Heart left ventricle (tissue), 16 donors: ENCODE measurements at regions of chr3 and their contacts with region 1.

Region 1: GRCh38 chr3:185824476-185825378 is at the start of gene IGF2BP2:
- DNase-seq: peak; percentile 60 to 81 (median 67)
- ATAC-seq: peak; percentile 31 to 85 (median 70)
- H3K4me3 ChIP-seq: peak within 1 kb of the TSS; percentile 66 to 84 (median 74)
- H3K27ac ChIP-seq: peak within 1 kb of the TSS in 11 of 12 donors; percentile 49 to 83 (median 68)
- H3K4me1 ChIP-seq: peaks cover 0 to 39% (median 7%) of the 10 kb centered on the region in 12 donors
- H3K27me3 ChIP-seq: peaks cover 0 to 52% (median 9%) of the 10 kb centered on the region in 9 donors
- CTCF ChIP-seq: peak in 2 of 12 donors; percentile 3 to 17
- POLR2A ChIP-seq: peak in 1 of 2 donors; percentile 53
- total RNA-seq, gene IGF2BP2: 11.2 to 21.8 (median 16.8) TPM

Region 2: DNA sequence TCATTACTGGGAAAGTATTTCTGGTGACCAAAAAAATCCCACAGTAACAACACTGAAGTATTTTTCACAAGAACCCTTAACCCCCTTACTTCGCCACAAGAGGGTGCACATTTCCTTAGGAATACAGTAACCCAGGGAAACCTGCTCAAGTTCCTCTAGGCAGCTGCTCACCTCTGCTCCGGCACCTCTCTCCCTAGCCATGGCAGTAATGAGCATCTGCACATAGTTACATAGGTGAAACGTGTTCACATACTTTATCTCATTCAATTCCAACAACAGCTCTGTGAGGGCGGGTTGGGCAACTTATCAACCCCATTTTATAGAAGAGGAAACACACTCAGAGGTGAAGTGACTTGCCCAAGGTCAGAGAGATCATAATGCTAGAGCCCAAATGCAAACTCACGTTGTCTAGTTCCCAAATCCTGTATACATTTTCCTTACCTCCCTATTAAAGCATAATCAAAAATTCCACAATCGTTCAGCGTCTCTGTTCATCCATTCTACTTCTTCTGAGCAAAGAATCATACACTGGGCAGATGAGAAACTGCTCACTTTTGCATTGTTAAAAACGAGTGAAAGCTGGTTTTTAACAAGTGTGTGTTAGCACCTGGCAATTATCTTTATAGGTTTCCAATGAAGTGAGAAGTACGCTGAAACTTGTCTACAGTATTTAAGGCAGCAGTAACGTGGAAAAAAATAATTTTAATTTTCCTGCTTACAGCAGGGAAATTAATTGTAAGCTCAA is 90.6 kb before region 1 on chr3:
- intact Hi-C with region 1: loop called in 3 of 10 experiments (anchors 5 to 10 kb)
- DNase-seq: peak in 3 of 5 donors; percentile 15 to 39 (median 32)
- ATAC-seq: peak in 3 of 4 donors; percentile 66 to 76 (median 72)
- H3K4me3 ChIP-seq: no peak overlapping the region
- H3K27ac ChIP-seq: no peak overlapping the region
- H3K4me1 ChIP-seq: peaks cover 0 to 7% (median 0%) of the 10 kb centered on the region in 12 donors
- H3K27me3 ChIP-seq: no peaks in the 10 kb centered on the region
- CTCF ChIP-seq: peak in 11 of 12 donors; percentile 27 to 55 (median 48)
- POLR2A ChIP-seq: no peak

Region 3: GRCh38 chr3:185929192-185930151 is 104.7 kb after region 1 on chr3:
- intact Hi-C with region 1: loop called in 1 of 10 experiments (anchors 10 kb)
- DNase-seq: no peak
- ATAC-seq: peak in 3 of 4 donors; percentile 32 to 39 (median 35)
- H3K4me3 ChIP-seq: peak overlapping the region in 6 of 12 donors; percentile 1 to 100 (median 11)
- H3K27ac ChIP-seq: peak overlapping the region in 3 of 12 donors; percentile 5 to 29 (median 5)
- H3K4me1 ChIP-seq: peaks cover 33 to 98% (median 94%) of the 10 kb centered on the region in 12 donors
- H3K27me3 ChIP-seq: no peaks in the 10 kb centered on the region
- CTCF ChIP-seq: no peak
- POLR2A ChIP-seq: no peak

Region 4: DNA sequence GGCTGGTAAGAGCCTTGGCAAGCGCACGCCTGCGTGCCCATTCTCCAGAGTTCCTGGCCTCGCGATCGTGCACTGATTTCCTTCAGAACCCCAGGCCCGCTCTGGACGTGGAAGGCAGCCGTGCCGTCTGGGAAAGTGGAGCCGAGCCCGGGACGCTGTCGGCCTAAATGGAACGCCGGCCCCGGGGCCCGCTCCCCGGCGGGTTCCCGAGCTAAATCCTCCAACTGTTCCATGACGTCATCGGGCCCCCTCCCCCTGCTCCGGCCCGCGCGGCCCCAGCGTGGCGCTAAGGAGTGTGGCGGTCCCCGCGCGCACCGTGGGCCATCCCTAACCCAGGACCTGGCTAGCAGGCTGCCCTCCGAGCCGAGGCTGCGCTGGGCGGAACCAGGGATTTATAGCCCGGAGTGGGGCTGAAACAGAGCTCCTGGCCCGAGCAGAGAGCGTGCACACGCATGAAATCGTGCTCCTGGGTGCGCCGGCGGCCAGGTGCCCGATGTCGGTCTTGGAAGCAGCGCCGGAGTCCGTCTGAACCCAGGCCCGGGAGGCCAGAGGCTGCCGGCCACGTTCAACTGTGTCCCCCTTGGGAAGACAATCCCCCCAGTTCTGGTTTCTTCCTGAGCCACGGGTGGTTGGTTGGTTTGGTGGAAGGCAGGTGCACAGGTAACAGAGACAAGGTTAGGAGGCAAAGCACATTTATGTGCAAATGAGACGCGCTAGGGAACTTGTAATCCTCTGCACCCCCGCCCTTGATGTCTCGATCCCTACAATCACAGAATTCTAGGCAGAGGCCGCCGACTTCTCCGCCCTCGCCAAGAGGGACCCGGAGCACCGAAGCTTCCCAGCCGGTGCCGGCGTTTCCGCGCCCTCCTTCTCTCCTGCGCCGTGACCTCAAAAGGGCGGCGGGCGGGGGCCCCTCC is 369.1 kb after region 1 on chr3:
- intact Hi-C with region 1: no loop called
- DNase-seq: peak; percentile 34 to 65 (median 42)
- ATAC-seq: peak in 3 of 4 donors; percentile 54 to 78 (median 74)
- H3K4me3 ChIP-seq: peak overlapping the region in 10 of 12 donors; percentile 11 to 46 (median 32)
- H3K27ac ChIP-seq: peak overlapping the region in 1 of 12 donors; percentile 40
- H3K4me1 ChIP-seq: peaks cover 0 to 12% (median 8%) of the 10 kb centered on the region in 12 donors
- H3K27me3 ChIP-seq: peaks cover 0 to 20% (median 4%) of the 10 kb centered on the region in 9 donors
- CTCF ChIP-seq: no peak
- POLR2A ChIP-seq: no peak